Panc1 (cell line): ENCODE measurements at regions of chr7 and their contacts with region 1.

Region 1: GRCh38 chr7:18174996-18175395 is 147.3 kb upstream of the PRPS1L1 start:
- DNase-seq: no peak
- ATAC-seq: no peak
- H3K4me3 ChIP-seq: no peak overlapping the region
- H3K27ac ChIP-seq: no peak overlapping the region
- H3K4me1 ChIP-seq: no peaks in the 10 kb centered on the region
- H3K27me3 ChIP-seq: no peaks in the 10 kb centered on the region
- CTCF ChIP-seq: no peak

Region 2: DNA sequence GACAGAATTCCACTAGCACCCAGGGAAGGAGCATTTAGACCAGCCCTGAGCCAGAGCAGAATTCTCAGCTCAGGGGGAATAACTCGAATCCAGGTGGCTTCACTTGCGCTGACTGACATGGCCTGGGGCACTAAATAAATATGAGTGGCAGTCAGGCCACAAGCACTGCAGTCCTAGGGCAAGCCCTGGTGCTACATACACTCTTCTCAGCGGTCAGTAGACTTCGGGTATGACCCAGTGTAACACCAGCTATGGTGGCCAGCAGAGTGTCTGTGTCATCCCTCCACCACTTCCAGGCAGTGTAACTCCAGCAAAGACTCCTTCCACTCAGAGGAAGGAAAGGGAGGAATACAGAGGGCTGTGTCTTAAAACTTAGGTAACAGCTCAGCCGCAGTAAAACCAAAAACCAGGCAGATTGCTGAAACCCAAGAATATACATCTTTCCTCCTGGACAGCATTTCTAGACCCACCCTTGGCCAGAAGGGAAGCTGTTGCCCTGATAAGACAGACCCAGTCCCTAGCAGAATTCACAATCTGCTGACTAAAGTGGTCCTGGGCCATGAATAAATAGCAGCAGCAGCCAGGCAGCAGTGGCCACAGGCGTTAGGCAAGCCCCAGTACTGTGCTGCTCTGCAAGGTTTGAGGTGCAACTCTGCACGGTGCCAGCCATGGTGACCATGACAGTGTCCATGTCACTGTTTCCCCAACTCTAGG is 311.7 kb before region 1 on chr7:
- CTCF ChIA-PET with region 1: no interaction called
- POLR2A ChIA-PET with region 1: no interaction called
- in situ Hi-C with region 1: no loop called
- intact Hi-C with region 1: no loop called
- DNase-seq: no peak
- ATAC-seq: no peak
- H3K4me3 ChIP-seq: no peak overlapping the region
- H3K27ac ChIP-seq: no peak overlapping the region
- H3K4me1 ChIP-seq: no peaks in the 10 kb centered on the region
- H3K27me3 ChIP-seq: no peaks in the 10 kb centered on the region
- CTCF ChIP-seq: no peak

Region 3: GRCh38 chr7:18064242-18064838 is 110.7 kb before region 1 on chr7:
- CTCF ChIA-PET with region 1: interaction called, 16 read pairs
- POLR2A ChIA-PET with region 1: no interaction called
- in situ Hi-C with region 1: no loop called
- intact Hi-C with region 1: no loop called
- DNase-seq: peak; percentile 7
- ATAC-seq: peak; percentile 80; the same call in 1 of the 2 replicates
- H3K4me3 ChIP-seq: no peak overlapping the region
- H3K27ac ChIP-seq: no peak overlapping the region
- H3K4me1 ChIP-seq: no peaks in the 10 kb centered on the region
- H3K27me3 ChIP-seq: peaks cover 4% of the 10 kb centered on the region; the same call in 1 of the 2 replicates
- CTCF ChIP-seq: peak; percentile 73